Calu3 (cell line): ENCODE measurements at regions of chr5 and their contacts with region 1.

Region 1: DNA sequence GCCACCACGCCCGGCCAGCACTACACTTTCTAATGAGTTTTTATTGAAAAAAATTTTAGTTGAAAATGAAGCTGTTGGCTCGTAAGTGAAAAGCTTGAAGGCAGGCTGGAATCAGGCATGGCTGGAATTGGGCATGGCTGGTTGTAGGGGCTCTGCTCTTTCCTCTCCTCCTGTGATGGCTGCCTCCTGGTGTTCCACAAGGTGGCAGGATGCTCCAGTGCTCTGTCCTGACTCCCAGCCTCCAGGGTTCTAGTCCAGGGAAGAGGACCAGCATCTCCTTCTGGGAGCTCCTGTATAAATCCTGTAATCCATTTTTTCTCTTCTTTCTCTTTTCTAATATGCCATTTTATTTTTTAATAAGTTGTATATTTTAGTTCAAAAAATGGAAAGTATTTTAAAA is 57.2 kb upstream of the DHFR start:
- DNase-seq: peak; percentile 51
- H3K4me3 Mint-ChIP-seq: no peak overlapping the region
- H3K27ac Mint-ChIP-seq: no peak overlapping the region
- H3K4me1 Mint-ChIP-seq: peaks cover 20% of the 10 kb centered on the region
- H3K27me3 Mint-ChIP-seq: no peaks in the 10 kb centered on the region
- CTCF ChIP-seq: peak; percentile 41

Region 2: GRCh38 chr5:80921026-80921425 is 209.1 kb after region 1 on chr5:
- CTCF ChIA-PET with region 1: no interaction called
- intact Hi-C with region 1: loop called (anchors 10 kb)
- DNase-seq: peak; percentile 35
- H3K4me3 Mint-ChIP-seq: no peak overlapping the region
- H3K27ac Mint-ChIP-seq: peak overlapping the region; percentile 22
- H3K4me1 Mint-ChIP-seq: peaks cover 29% of the 10 kb centered on the region
- H3K27me3 Mint-ChIP-seq: no peaks in the 10 kb centered on the region
- CTCF ChIP-seq: no peak

Region 3: DNA sequence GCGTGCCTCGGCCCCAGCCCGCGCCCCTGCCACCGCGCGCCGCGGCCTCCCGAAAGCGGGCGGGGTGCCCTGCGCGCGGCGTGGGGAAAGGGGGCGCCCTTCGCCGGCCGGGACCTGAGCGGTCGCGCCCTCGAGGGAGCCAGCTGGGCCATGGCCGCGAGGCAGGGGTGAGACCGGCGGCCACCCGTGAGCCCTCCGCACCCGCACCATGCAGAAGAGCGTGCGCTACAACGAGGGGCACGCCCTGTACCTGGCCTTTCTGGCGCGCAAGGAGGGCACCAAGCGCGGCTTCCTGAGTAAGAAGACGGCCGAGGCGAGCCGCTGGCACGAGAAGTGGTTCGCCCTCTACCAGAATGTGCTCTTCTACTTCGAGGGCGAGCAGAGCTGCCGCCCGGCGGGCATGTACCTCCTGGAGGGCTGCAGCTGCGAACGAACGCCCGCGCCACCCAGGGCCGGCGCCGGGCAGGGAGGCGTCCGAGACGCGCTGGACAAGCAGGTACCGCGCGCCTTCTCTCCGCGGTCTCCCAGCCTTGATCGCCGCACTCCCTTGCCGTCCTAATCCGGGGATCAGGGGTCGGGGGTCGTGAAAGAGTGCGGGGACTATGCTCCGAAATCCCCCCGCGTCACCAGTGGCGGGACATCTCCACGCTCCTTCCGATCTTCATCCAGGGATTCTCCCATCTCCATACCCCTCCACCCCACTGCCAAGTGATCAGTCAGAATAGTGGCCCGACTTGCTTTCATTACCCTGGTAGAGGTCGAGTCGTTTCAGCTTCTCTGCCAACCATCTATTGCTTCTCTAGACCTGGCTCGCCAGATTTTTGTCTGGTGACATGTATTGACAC is 248.8 kb after region 1 on chr5:
- CTCF ChIA-PET with region 1: no interaction called
- intact Hi-C with region 1: loop called (anchors 5 kb)
- DNase-seq: peak; percentile 82
- H3K4me3 Mint-ChIP-seq: peak overlapping the region; percentile 70
- H3K27ac Mint-ChIP-seq: peak overlapping the region; percentile 65
- H3K4me1 Mint-ChIP-seq: peaks cover 50% of the 10 kb centered on the region
- H3K27me3 Mint-ChIP-seq: no peaks in the 10 kb centered on the region
- CTCF ChIP-seq: peak; percentile 53

Region 4: GRCh38 chr5:81105261-81105877 is 393.4 kb after region 1 on chr5:
- CTCF ChIA-PET with region 1: interaction called, 17 read pairs
- intact Hi-C with region 1: loop called (anchors 2 kb)
- DNase-seq: no peak
- H3K4me3 Mint-ChIP-seq: no peak overlapping the region
- H3K27ac Mint-ChIP-seq: no peak overlapping the region
- H3K4me1 Mint-ChIP-seq: no peaks in the 10 kb centered on the region
- H3K27me3 Mint-ChIP-seq: no peaks in the 10 kb centered on the region
- CTCF ChIP-seq: no peak

Region 5: GRCh38 chr5:81165493-81166119 is 453.7 kb after region 1 on chr5:
- CTCF ChIA-PET with region 1: no interaction called
- intact Hi-C with region 1: loop called (anchors 10 kb)
- DNase-seq: peak; percentile 83
- H3K4me3 Mint-ChIP-seq: no peak overlapping the region
- H3K27ac Mint-ChIP-seq: no peak overlapping the region
- H3K4me1 Mint-ChIP-seq: peaks cover 18% of the 10 kb centered on the region
- H3K27me3 Mint-ChIP-seq: no peaks in the 10 kb centered on the region
- CTCF ChIP-seq: peak; percentile 77

Region 6: DNA sequence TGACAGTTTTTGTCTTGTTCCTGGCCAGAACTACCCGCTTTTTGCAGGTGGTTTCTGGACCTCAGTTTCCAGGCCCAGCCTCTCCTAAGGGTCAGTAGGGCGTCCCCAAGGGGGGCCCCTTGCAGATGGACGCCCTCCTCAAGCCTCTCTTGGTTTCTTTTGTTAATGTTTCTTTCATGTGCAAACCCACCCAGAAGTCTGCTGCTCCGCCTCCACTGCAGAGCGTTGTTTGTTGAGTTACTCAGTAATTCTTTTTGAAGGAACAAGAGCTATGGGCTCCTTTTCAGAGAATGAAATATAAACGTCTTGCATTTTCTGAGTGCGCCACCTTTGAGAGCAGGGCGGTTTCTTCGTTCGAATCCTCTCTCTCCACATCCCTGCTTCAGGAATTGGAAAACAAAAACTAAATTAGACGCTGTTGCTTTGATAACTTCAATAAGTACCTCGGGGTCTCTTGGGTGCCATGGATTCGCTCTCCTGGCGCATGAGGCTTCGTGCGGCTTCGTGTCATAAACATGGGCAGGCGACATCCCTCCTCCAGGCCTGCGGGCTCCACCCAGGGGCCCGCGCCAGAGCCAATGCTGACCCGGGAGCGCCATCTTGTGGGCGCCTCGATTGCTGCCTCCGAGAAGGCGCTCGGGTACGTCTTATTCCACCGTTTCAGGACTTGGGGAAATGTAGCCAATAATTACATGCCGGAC is 482.8 kb after region 1 on chr5:
- CTCF ChIA-PET with region 1: no interaction called
- intact Hi-C with region 1: loop called (anchors 10 kb)
- DNase-seq: peak; percentile 93
- H3K4me3 Mint-ChIP-seq: peak overlapping the region; percentile 10
- H3K27ac Mint-ChIP-seq: no peak overlapping the region
- H3K4me1 Mint-ChIP-seq: peaks cover 9% of the 10 kb centered on the region
- H3K27me3 Mint-ChIP-seq: no peaks in the 10 kb centered on the region
- CTCF ChIP-seq: peak; percentile 91